GM13976 (cell line): ENCODE measurements at regions of chr4 and their contacts with region 1.

Region 1: DNA sequence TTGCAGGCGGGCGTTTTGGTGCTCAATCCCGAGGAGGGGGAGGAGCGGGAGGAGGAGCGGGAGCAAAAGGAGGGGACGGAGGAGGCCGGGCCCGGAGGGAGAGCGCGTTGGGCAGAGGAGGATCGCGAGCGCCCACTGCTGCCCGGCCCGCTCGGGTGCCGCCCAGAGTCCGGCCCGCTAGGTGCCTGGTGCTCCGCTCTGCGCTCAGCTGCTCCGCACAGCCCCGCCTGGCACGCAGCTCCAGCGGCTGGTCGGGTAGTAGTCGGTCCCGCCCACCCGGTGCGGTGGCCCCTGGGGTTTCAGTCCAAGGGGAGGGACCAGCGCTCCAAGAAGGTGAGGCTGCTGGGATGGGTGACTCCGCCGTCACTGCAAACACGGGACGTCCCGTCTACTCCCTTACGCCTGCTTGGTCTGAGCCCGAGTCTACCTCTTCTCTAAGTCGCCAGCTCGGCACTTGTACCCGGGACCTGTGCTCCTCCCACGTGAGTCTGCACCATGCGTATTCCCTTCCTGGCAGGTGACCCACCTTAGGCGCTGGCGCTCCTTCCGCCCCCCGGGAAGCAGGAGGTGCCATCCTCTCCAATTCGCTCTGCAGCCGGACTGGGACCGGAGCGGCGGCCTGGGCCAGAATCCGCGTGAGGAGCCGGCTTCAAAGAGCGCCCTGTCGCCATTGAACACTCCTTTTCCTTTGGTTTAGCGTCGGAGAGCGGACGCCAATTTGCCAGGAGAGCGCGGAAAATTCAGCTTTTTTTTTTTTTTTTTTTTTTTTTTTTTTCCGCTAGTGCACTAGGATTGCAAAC is 405 bp upstream of the HS3ST1 start:
- DNase-seq: peak; percentile 80
- CTCF ChIP-seq: peak; percentile 58

Region 2: GRCh38 chr4:10743357-10743756 is 685.7 kb before region 1 on chr4:
- in situ Hi-C with region 1: loop called (anchors 10 kb)
- DNase-seq: no peak
- CTCF ChIP-seq: no peak

Region 3: GRCh38 chr4:11765849-11766453 is 336.9 kb after region 1 on chr4:
- in situ Hi-C with region 1: no loop called
- DNase-seq: no peak
- CTCF ChIP-seq: peak; percentile 44